PC-3 (cell line): ENCODE measurements at regions of chr1 and their contacts with region 1.

Region 1: GRCh38 chr1:18332581-18332980 is 148.1 kb upstream of the KLHDC7A start:
- DNase-seq: no peak
- ATAC-seq: no peak
- H3K4me3 ChIP-seq: no peak overlapping the region
- H3K27ac ChIP-seq: no peak overlapping the region
- H3K4me1 ChIP-seq: no peaks in the 10 kb centered on the region
- H3K27me3 ChIP-seq: 0 out of 2 replicates have a peak, but pooled peaks cover 2% of the 10 kb centered on the region
- CTCF ChIP-seq: no peak

Region 2: GRCh38 chr1:18182398-18183160 is 150.0 kb before region 1 on chr1:
- CTCF ChIA-PET with region 1: interaction called, 11 read pairs
- POLR2A ChIA-PET with region 1: no interaction called
- intact Hi-C with region 1: no loop called
- DNase-seq: no peak
- ATAC-seq: no peak
- H3K4me3 ChIP-seq: no peak overlapping the region
- H3K27ac ChIP-seq: no peak overlapping the region
- H3K4me1 ChIP-seq: no peaks in the 10 kb centered on the region
- H3K27me3 ChIP-seq: peaks cover 25% of the 10 kb centered on the region
- CTCF ChIP-seq: no peak